Activated CD8-positive, alpha-beta T cell treated with anti-CD3 and anti-CD28 coated beads for 36 hours (primary cell): ENCODE measurements at regions of chr3 and their contacts with region 1.

Region 1: DNA sequence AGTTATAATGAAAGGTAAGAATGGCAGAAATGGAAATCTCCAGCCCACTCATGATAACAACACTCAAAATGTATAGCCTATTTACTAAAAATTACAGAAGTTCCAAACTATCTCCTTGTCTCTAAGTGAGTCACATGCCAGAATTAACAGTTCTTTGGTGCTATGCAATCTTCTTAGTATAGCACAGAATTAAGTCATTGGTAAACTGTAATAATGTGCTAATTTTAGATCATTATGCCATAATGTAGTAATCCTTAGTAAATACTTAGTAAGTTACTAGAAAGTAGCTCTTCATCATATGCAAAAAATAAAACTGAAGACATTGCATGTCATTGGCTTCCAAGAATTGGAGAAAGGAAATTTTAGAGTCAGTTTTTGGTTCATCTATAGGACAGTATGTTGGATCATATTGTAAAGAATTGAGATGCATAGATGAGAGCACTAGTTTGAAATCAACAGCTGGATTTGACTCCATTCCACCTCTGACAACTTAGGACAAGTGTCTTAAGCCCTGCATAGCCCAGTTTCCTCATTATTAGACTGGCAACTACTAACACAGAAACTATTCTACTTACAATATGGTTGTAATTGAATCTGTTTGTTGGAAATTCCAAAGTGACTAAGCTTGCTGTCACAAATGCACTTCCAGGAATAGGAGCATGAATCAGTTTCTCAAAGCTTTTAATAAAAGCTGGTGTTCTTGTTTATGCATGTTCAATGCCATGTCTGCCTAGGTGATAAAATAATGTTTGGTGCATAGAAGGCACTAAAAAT is 40.1 kb upstream of the CD47 start:
- DNase-seq: no peak
- ATAC-seq: peak; percentile 34
- H3K4me3 Mint-ChIP-seq: peak overlapping the region; percentile 45
- H3K27ac Mint-ChIP-seq: peak overlapping the region; percentile 87
- H3K4me1 Mint-ChIP-seq: peaks cover 87% of the 10 kb centered on the region
- H3K27me3 Mint-ChIP-seq: no peaks in the 10 kb centered on the region
- CTCF ChIP-seq: no peak

Region 2: GRCh38 chr3:108117241-108117775 is 13.6 kb before region 1 on chr3:
- CTCF ChIA-PET with region 1: no interaction called
- POLR2A ChIA-PET with region 1: interaction called, 12 read pairs
- intact Hi-C with region 1: no loop called
- DNase-seq: peak; percentile 24
- ATAC-seq: peak; percentile 49
- H3K4me3 Mint-ChIP-seq: no peak overlapping the region
- H3K27ac Mint-ChIP-seq: no peak overlapping the region
- H3K4me1 Mint-ChIP-seq: peaks cover 40% of the 10 kb centered on the region
- H3K27me3 Mint-ChIP-seq: no peaks in the 10 kb centered on the region
- CTCF ChIP-seq: no peak

Region 3: GRCh38 chr3:108546247-108546646 is 415.4 kb after region 1 on chr3:
- CTCF ChIA-PET with region 1: no interaction called
- POLR2A ChIA-PET with region 1: no interaction called
- intact Hi-C with region 1: no loop called
- DNase-seq: no peak
- ATAC-seq: no peak
- H3K4me3 Mint-ChIP-seq: no peak overlapping the region
- H3K27ac Mint-ChIP-seq: no peak overlapping the region
- H3K4me1 Mint-ChIP-seq: peaks cover 3% of the 10 kb centered on the region
- H3K27me3 Mint-ChIP-seq: no peaks in the 10 kb centered on the region
- CTCF ChIP-seq: no peak